Heart right ventricle (tissue), 16 donors: ENCODE measurements at regions of chr14 and their contacts with region 1.

Region 1: GRCh38 chr14:77028384-77029231 is at the start of gene IRF2BPL:
- DNase-seq: peak; percentile 99 to 100
- ATAC-seq: peak; percentile 66 to 80 (median 77)
- H3K4me3 ChIP-seq: peak within 1 kb of the TSS; percentile 72 to 98 (median 85)
- H3K27ac ChIP-seq: peak within 1 kb of the TSS; percentile 99 to 100 (median 100)
- H3K4me1 ChIP-seq: peaks cover 27 to 76% (median 72%) of the 10 kb centered on the region in 9 donors
- H3K27me3 ChIP-seq: no peaks in the 10 kb centered on the region
- CTCF ChIP-seq: no peak
- total RNA-seq, gene IRF2BPL: 25.1 to 66.6 (median 36.4) TPM

Region 2: DNA sequence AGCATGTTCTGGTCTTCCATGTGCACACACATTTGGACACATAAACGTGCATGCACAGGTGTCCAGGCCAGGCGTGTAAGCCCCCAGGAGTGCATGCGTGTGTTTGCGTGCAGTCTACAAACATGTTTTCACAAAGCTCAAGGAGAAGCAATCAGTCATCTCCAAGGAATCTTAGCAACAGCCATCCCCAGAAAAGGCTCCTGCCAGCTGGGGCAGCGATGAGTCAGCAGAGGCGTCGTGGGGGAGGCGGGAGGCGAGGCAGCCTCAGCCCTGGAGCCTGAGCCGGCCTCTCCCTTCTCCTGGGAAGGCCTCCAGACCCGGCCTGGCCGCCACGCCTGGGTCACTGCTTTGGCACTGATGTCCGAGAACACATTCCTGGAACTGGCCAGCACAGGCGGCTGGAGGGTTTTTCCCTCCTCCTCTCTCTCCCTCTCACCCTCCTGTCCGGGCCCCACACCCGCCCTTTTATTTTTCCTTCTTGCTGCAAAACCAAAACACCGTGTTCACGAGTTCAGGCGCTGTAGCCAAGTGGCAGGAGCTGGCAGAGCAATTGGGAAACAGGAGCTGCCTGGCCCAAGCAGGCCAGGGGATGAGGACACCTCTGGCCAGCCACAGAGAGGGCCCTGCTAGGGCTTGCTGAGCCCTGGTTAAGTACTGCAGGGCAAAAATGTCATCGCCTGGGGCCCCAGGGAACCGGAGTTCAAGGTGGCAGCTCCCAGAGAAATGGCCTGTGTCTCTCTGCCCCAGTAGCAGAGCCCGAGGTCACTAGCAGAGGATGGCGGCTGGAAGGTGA is 109.7 kb before region 1 on chr14:
- intact Hi-C with region 1: loop called in 6 of 10 experiments (anchors 1 to 10 kb)
- DNase-seq: peak; percentile 93 to 94
- ATAC-seq: peak; percentile 86 to 93 (median 91)
- H3K4me3 ChIP-seq: peak overlapping the region in 4 of 10 donors; percentile 1 to 16 (median 6)
- H3K27ac ChIP-seq: peak overlapping the region; percentile 83 to 98 (median 92)
- H3K4me1 ChIP-seq: peaks cover 35 to 75% (median 56%) of the 10 kb centered on the region in 9 donors
- H3K27me3 ChIP-seq: no peaks in the 10 kb centered on the region
- CTCF ChIP-seq: no peak

Region 3: GRCh38 chr14:76956316-76957090 is 72.1 kb before region 1 on chr14:
- intact Hi-C with region 1: loop called (anchors 2 to 10 kb)
- DNase-seq: peak; percentile 90 to 92
- ATAC-seq: peak; percentile 76 to 87 (median 82)
- H3K4me3 ChIP-seq: peak overlapping the region in 9 of 10 donors; percentile 19 to 57 (median 49)
- H3K27ac ChIP-seq: peak overlapping the region; percentile 84 to 99 (median 97)
- H3K4me1 ChIP-seq: peaks cover 21 to 79% (median 53%) of the 10 kb centered on the region in 9 donors
- H3K27me3 ChIP-seq: no peaks in the 10 kb centered on the region
- CTCF ChIP-seq: peak in 5 of 9 donors; percentile 17 to 29 (median 26)

Region 4: DNA sequence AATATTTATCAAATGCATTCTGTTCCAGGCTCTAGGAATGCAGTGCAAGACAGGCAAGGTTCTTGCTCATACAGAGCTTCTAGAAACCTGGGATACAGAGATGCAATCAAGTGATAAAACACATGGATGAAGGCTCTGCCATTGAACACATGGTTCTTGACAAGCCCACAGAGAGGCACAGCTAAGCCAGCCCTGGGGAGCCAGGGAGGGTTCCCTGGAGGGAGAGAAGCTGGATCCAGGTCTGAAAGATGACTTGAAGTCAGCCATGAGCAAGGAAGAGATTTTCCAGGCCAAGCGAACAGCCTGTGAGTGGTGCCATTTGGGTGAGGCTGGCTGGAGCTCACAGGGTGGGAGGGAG is 66.3 kb before region 1 on chr14:
- intact Hi-C with region 1: loop called (anchors 2 to 10 kb)
- DNase-seq: no peak
- ATAC-seq: peak in 1 of 8 donors; percentile 4
- H3K4me3 ChIP-seq: peak overlapping the region in 9 of 10 donors; percentile 30 to 60 (median 50)
- H3K27ac ChIP-seq: peak overlapping the region in 9 of 10 donors; percentile 73 to 99 (median 92)
- H3K4me1 ChIP-seq: peaks cover 1 to 50% (median 24%) of the 10 kb centered on the region in 9 donors
- H3K27me3 ChIP-seq: no peaks in the 10 kb centered on the region
- CTCF ChIP-seq: no peak

Region 5: DNA sequence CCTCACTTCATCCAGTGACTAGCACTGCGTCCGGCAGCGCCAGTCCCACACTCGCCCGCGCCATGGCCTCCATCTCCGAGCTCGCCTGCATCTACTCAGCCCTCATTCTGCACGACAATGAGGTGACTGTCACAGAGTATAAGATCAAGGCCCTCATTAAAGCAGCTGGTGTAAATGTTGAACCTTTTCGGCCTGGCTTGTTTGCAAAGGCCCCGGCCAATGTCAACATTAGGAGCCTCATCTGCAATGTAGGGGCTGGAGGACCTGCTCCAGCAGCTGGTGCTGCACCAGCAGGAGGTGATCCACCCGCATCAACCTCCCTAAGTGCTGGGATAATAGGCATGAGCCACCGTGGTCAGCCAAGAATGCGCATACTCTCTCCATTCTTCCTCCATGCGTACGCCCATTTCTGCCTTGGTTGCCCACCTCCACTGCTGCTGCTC is 60.0 kb before region 1 on chr14:
- intact Hi-C with region 1: loop called in 2 of 10 experiments (anchors 5 to 10 kb)
- DNase-seq: no peak
- ATAC-seq: no peak
- H3K4me3 ChIP-seq: no peak overlapping the region
- H3K27ac ChIP-seq: no peak overlapping the region
- H3K4me1 ChIP-seq: peaks cover 0 to 7% (median 0%) of the 10 kb centered on the region in 9 donors
- H3K27me3 ChIP-seq: no peaks in the 10 kb centered on the region
- CTCF ChIP-seq: no peak

Region 6: DNA sequence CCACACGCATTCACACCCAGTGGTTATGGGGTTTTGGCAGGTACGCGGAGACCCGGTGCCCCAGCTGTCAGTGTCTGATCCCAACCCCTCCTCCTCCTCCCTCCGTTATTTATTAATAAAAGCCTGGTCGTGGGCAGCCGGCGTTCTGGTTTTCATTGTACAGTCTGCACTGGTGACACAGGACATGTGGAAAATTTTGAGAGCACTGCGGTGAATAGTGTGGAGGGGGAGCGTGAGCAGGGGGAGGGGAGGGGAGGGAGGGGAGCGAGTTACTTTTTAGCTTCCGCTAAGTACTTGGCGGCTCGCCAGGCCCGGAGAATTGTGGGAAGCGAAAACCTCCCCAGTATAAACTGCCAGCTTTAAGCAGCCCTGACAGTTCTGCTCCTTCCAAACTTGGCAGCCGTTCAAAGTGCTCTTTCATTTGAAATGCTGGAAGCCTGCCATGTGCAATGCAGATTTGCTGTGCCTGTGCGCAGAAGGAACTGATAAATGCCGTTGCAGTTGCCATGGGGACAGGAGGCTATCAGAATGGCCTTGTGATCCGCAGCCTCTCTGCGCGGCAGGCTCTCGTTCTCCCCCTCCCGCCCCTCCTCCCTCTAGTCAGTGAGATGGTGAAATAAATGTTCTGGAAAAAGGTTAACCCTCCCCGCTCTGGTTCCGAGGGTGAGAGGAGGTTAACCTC is 11.6 kb after region 1 on chr14:
- intact Hi-C with region 1: loop called in 2 of 10 experiments (anchors 1 to 2 kb)
- DNase-seq: peak; percentile 100
- ATAC-seq: peak; percentile 79 to 92 (median 88)
- H3K4me3 ChIP-seq: peak overlapping the region in 9 of 10 donors; percentile 19 to 46 (median 40)
- H3K27ac ChIP-seq: peak overlapping the region; percentile 90 to 100 (median 96)
- H3K4me1 ChIP-seq: peaks cover 50 to 94% (median 87%) of the 10 kb centered on the region in 9 donors
- H3K27me3 ChIP-seq: no peaks in the 10 kb centered on the region
- CTCF ChIP-seq: no peak

Region 7: DNA sequence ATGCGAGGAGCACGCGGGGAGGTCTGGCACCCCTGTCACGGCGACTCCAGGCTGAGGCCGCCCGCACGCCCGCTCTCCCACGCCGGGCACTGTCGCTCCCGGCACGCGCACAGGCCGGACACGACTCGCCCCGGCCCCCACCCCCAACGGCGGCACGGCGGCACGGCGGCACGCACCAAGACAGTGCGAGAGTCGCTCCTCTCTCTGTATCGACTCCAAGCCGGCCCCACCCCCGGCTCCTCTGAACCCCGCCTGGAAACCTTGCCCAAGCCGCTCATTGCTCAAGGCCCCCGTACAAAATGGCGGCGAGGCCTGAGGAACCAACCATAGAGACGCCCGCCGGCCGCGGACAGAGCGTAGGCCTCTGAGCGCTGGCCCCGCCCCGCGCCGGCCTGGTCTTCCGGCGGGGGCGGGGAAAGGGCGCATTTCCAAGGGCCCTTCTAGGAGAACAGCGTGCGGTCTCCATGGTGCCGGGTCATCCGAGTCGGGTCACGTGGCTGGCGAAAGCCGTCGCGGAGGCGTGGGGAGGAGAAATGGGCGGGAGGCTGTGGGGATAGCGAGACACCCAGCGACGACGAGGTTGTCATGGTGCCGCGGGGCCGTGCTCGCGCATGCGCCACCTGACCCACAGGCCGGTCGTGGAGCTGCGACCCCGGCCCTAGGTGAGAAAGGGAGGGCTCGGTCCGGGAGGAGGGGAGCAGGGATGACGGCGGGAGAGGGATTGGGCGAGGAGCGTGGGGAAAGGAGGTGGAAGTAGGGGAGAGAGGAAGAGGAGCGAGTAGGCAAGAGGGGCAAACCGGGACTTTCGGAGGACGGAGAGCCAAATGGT is 69.3 kb after region 1 on chr14 and contains the start of gene CIPC:
- intact Hi-C with region 1: loop called in 2 of 10 experiments (anchors 2 to 5 kb)
- DNase-seq: peak; percentile 99 to 100
- ATAC-seq: peak; percentile 94 to 98 (median 96)
- H3K4me3 ChIP-seq: peak within 1 kb of the TSS; percentile 53 to 86 (median 73)
- H3K27ac ChIP-seq: peak within 1 kb of the TSS; percentile 94 to 99 (median 98)
- H3K4me1 ChIP-seq: peaks cover 0 to 62% (median 49%) of the 10 kb centered on the region in 9 donors
- H3K27me3 ChIP-seq: no peaks in the 10 kb centered on the region
- CTCF ChIP-seq: no peak
- total RNA-seq, gene CIPC: 51.4 to 93.8 (median 64.2) TPM